ENCODE measurements at regions of chr2 and their contacts with region 1.

Region 1: GRCh38 chr2:217166241-217166850 is 306.5 kb upstream of the TNP1 start:
- DNase-seq: no peak
- H3K4me3 ChIP-seq: no peak overlapping the region
- H3K27ac ChIP-seq: no peak overlapping the region
- H3K27me3 ChIP-seq: no peaks in the 10 kb centered on the region
- CTCF ChIP-seq: peak; percentile 68

Region 2: DNA sequence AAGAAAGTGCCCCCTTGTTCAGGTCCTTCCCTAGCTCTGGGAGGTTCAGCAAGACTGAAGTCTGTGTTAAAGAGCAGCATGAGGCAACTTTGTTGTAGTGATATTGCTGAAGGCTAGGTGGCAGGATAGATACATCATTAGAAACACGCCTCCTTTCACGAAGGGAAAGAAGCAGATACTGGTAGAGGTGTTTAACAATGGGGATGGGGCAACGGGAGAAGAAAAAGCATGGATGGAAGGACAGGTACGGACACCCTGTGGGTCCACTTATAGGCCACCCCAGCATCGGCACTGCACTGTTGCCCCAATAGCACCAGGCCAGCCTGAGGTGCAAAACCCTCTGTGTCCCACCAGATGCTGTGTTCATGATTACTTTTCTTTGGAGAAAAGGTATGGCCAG is 467.5 kb before region 1 on chr2:
- CTCF ChIA-PET with region 1: interaction called, 43 read pairs
- POLR2A ChIA-PET with region 1: interaction called, 8 read pairs
- DNase-seq: no peak
- H3K4me3 ChIP-seq: no peak overlapping the region
- H3K27ac ChIP-seq: no peak overlapping the region
- H3K27me3 ChIP-seq: no peaks in the 10 kb centered on the region
- CTCF ChIP-seq: peak; percentile 78

Region 3: DNA sequence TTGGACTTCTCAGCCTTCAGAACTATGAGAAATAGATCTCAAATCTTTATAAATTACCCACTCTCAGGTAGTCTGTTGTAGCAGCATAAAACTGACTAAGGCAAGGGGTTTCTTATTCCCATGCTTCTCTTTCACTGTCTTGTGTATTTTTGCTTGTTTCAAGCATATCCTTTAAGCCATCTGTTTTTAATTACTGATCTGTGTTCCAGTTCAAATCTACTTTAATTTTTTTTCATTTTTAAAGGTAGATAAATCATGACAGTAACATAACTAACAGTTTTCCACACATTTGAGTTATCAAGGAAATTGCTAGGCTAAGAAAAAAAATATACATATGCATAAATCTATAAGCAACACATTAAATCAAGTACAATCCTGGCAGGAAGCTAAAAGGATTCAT is 11.4 kb after region 1 on chr2:
- CTCF ChIA-PET with region 1: interaction called, 11 read pairs
- POLR2A ChIA-PET with region 1: no interaction called
- DNase-seq: no peak
- H3K4me3 ChIP-seq: no peak overlapping the region
- H3K27ac ChIP-seq: no peak overlapping the region
- H3K27me3 ChIP-seq: no peaks in the 10 kb centered on the region
- CTCF ChIP-seq: no peak

Region 4: DNA sequence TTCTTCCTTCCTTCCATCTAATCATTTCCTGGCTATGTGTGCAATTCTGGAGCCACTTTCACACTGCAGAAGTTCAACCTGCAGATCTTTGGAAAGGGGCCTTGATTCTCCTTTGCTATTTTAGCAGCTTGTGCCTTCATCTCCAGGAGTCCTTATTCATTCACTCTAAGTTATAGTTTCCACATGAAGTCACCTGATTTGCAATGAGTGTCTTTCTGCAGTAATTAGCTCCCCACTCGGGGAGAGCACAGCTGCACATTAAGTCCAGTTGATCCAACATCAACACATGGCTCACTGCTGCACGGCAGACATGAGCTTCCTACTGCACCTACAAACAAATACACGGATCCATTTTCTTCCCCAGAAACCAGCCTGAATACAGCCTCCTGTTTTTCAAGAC is 16.6 kb after region 1 on chr2:
- CTCF ChIA-PET with region 1: interaction called, 17 read pairs
- POLR2A ChIA-PET with region 1: no interaction called
- DNase-seq: no peak
- H3K4me3 ChIP-seq: no peak overlapping the region
- H3K27ac ChIP-seq: no peak overlapping the region
- H3K27me3 ChIP-seq: no peaks in the 10 kb centered on the region
- CTCF ChIP-seq: no peak

Region 5: GRCh38 chr2:217510771-217511291 is 344.5 kb after region 1 on chr2:
- CTCF ChIA-PET with region 1: interaction called, 17 read pairs
- POLR2A ChIA-PET with region 1: interaction called, 3 read pairs
- DNase-seq: peak; percentile 87
- H3K4me3 ChIP-seq: no peak overlapping the region
- H3K27ac ChIP-seq: no peak overlapping the region
- H3K27me3 ChIP-seq: no peaks in the 10 kb centered on the region
- CTCF ChIP-seq: peak; percentile 73

Region 6: GRCh38 chr2:217713395-217714286 is 547.3 kb after region 1 on chr2:
- CTCF ChIA-PET with region 1: interaction called, 10 read pairs
- POLR2A ChIA-PET with region 1: no interaction called
- DNase-seq: peak; percentile 54
- H3K4me3 ChIP-seq: no peak overlapping the region
- H3K27ac ChIP-seq: peak overlapping the region; percentile 31
- H3K27me3 ChIP-seq: no peaks in the 10 kb centered on the region
- CTCF ChIP-seq: peak; percentile 97

Measured in AG04450 (cell line).